A673 (cell line): ENCODE measurements at regions of chr4 and their contacts with region 1.

Region 1: DNA sequence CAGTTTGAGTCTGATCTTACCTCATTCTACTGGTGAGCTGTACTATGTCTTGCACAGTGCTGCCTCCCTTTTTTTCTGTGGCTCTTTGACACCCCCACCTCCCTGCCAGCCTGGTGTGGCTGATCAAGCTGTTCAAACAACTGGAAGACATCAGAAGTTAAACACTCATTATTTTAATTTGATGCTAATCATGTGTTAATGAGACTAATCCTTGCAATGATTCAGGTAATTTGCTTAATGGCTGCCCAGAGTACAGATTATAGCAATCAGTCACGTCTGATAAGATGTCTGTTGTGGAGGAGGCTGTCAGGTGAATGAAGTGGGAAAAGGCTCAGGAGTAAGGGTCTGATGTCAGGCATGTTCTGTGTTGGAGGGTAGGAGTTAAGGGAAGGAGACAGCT is 87.4 kb upstream of the GK2 start:
- DNase-seq: no peak
- H3K4me3 ChIP-seq: no peak overlapping the region
- H3K27ac ChIP-seq: no peak overlapping the region
- H3K4me1 ChIP-seq: no peaks in the 10 kb centered on the region
- H3K27me3 ChIP-seq: no peaks in the 10 kb centered on the region
- CTCF ChIP-seq: no peak

Region 2: DNA sequence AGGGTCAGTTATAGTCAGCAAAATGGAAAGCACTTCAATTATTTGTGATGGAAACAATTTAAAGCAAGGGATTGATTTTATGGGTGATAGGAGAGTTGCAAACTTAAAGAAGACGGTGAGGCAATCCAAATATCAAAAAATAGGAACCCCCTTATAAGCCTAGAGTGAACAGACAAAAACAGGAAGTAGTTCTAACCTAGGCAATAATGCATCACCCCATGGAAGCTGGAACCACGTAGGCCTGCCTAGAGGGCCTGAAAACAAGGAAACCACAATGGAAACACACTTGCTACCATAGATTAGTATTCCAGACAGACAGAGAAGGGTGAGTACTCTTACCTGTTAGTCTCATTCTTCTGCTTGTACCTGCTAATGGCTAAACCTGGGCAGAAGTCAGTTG is 74.0 kb before region 1 on chr4:
- CTCF ChIA-PET with region 1: no interaction called
- POLR2A ChIA-PET with region 1: no interaction called
- intact Hi-C with region 1: loop called (anchors 2 kb)
- DNase-seq: no peak
- H3K4me3 ChIP-seq: no peak overlapping the region
- H3K27ac ChIP-seq: no peak overlapping the region
- H3K4me1 ChIP-seq: no peaks in the 10 kb centered on the region
- H3K27me3 ChIP-seq: no peaks in the 10 kb centered on the region
- CTCF ChIP-seq: no peak